Activated CD8-positive, alpha-beta T cell treated with anti-CD3 and anti-CD28 coated beads, Interleukin-2, amount 10 ng/mL, durations not matched to agents 7 days and 5 days (primary cell): ENCODE measurements at regions of chr5 and their contacts with region 1.

Region 1: GRCh38 chr5:6359555-6360322 is 18.6 kb downstream of the MED10 start:
- DNase-seq: peak; percentile 73
- ATAC-seq: peak; percentile 93
- H3K4me3 Mint-ChIP-seq: peak overlapping the region; percentile 61
- H3K27ac Mint-ChIP-seq: peak overlapping the region; percentile 96
- H3K4me1 Mint-ChIP-seq: peaks cover 35% of the 10 kb centered on the region
- H3K27me3 Mint-ChIP-seq: no peaks in the 10 kb centered on the region

Region 2: DNA sequence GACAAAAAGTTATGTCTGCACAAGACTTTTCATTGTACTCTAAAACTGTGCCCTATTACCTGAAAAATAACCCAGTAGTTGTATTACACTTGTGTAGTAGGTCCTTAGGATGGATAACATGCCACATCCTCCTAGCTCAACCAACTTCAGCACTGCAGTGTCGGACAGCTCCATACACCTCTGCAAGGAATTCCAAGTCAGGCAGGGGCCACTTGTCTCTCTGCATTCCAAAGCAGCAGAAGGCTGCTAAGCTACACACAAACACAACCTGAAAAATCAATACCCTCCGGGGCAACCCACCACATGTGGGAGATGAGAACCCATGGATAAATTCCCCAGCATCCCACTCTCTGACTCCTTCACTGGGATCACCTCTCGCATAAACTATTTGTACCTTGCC is 31.6 kb before region 1 on chr5:
- CTCF ChIA-PET with region 1: no interaction called
- POLR2A ChIA-PET with region 1: no interaction called
- DNase-seq: peak; percentile 55
- ATAC-seq: no peak
- H3K4me3 Mint-ChIP-seq: no peak overlapping the region
- H3K27ac Mint-ChIP-seq: no peak overlapping the region
- H3K4me1 Mint-ChIP-seq: no peaks in the 10 kb centered on the region
- H3K27me3 Mint-ChIP-seq: no peaks in the 10 kb centered on the region

Region 3: GRCh38 chr5:6377905-6378765 is 18.4 kb after region 1 on chr5 and contains the start of gene MED10:
- CTCF ChIA-PET with region 1: interaction called, 4 read pairs
- POLR2A ChIA-PET with region 1: interaction called, 12 read pairs
- DNase-seq: peak; percentile 98
- ATAC-seq: peak; percentile 97
- H3K4me3 Mint-ChIP-seq: peak within 1 kb of the TSS; percentile 92
- H3K27ac Mint-ChIP-seq: peak within 1 kb of the TSS; percentile 95
- H3K4me1 Mint-ChIP-seq: peaks cover 34% of the 10 kb centered on the region
- H3K27me3 Mint-ChIP-seq: peaks cover 2% of the 10 kb centered on the region
- total RNA-seq, gene MED10: 49.2 to 51.5 TPM